ENCODE measurements at regions of chr11 and their contacts with region 1.

Region 1: DNA sequence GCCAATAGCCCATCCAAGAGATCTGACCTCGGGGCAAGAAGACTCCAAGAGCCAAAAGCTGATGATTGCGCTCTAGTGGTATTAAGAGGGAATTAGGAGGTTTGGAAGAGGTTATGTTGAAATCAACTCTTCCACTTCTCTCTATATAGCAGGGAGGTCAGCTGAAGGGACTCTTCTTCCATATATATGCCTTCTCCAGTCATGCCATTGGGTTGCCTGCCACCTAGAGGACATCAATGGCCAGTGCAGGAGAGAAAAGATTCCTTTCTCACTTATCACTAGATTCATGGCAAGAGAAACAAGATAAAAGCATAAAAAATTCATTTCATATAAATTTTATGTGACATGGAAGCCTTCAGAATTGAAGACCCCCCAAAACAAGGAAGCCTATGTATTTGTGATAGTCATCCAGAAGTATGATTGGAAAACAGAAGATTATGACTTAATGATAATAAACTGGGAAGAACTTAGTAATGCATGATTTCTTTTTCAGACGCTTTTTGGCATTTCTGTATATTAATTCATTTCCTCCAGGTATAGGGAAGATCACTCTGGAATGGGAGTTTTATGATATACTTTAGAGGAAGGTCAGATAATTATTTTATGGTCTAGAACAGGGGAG is 435.1 kb upstream of the DDI1 start:
- DNase-seq: peak; percentile 30 to 77 (median 52)
- H3K4me3 ChIP-seq: no peak overlapping the region
- H3K27ac ChIP-seq: no peak overlapping the region
- H3K4me1 ChIP-seq: no peaks in the 10 kb centered on the region
- H3K27me3 ChIP-seq: no peaks in the 10 kb centered on the region
- CTCF ChIP-seq: peak; percentile 73 to 90 (median 86)
- POLR2A ChIP-seq: no peak

Region 2: GRCh38 chr11:103170860-103171259 is 430.5 kb before region 1 on chr11:
- intact Hi-C with region 1: no loop called
- DNase-seq: no peak
- H3K4me3 ChIP-seq: no peak overlapping the region
- H3K27ac ChIP-seq: no peak overlapping the region
- H3K4me1 ChIP-seq: no peaks in the 10 kb centered on the region
- H3K27me3 ChIP-seq: no peaks in the 10 kb centered on the region
- CTCF ChIP-seq: no peak
- POLR2A ChIP-seq: no peak

Region 3: DNA sequence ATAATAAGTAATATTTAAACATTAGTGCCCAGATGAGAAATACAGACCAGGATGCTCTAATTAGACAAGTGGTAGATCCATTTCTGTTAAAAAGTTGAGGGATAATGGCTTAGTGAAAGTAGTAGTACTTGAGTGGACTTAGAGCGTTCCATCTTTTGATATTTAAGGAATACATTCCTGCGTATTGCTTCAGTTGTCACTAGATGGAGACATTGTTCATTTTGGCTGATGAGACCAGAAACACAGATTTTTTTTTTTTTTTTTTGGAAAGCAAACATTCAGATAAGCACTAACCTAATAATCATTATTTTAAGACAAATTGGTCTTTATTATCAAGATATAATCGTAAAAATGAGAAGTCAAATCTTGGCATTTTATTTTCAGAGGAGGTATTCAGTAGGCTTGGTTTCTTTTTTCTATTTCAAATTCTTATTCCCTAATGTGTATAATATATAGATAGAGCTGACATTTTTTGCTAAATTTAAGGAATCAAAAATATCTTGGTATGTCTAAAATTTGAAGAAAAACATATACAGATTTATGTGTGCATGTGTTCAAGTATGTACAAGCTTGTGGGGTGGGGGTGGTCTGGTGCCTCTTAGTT is 399.2 kb before region 1 on chr11:
- intact Hi-C with region 1: loop called in 1 of 2 experiments (anchors 5 kb)
- DNase-seq: no peak
- H3K4me3 ChIP-seq: no peak overlapping the region
- H3K27ac ChIP-seq: no peak overlapping the region
- H3K4me1 ChIP-seq: no peaks in the 10 kb centered on the region
- H3K27me3 ChIP-seq: no peaks in the 10 kb centered on the region
- CTCF ChIP-seq: peak; percentile 28 to 73 (median 58)
- POLR2A ChIP-seq: no peak

Region 4: DNA sequence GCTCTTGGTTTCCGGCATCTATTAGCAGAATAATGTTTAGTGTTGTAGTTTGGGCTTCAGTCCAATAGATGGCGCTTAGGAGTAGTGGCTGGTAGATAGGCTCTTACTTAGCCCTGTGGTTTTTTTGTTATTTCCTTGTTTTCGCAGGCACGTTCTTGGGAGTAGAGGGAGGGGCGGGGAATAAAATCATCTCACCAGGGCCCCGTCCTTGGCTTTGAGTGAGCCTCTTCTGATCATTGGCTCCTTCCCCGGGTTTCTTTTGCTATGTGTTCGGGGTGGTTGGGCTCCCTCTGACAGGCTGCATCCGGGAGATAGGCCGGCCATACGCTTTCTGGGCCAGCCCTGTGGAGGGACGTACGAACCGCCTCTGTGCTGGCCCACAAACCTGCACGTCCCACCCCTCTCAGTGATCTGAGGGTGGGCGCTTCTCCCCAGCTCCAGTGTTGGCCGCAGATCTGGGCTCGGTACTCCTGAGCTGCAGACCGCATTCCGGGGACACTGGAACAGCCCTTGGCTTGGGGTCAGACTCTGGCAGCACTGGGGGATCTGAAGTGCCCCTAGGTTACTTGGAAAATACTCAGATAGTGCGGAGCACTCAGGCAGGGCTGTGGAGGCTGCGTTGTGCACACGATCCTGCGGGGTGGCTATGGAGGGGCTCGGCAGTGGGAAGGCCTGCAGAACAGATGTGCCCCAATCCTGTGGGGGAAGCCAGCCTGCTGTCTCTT is 275.1 kb before region 1 on chr11:
- intact Hi-C with region 1: loop called in 1 of 2 experiments (anchors 10 kb)
- DNase-seq: peak; percentile 56 to 81 (median 71)
- H3K4me3 ChIP-seq: peak overlapping the region in 1 of 4 donors; percentile 12
- H3K27ac ChIP-seq: peak overlapping the region in 1 of 5 donors; percentile 42
- H3K4me1 ChIP-seq: peaks cover 4 to 8% of the 10 kb centered on the region in 2 donors
- H3K27me3 ChIP-seq: no peaks in the 10 kb centered on the region
- CTCF ChIP-seq: peak; percentile 45 to 68 (median 60)
- POLR2A ChIP-seq: no peak

Measured in adrenal gland (tissue), 19 donors.